ENCODE measurements at regions of chr5 and their contacts with region 1.

Region 1: GRCh38 chr5:7754992-7755596 is 95.8 kb downstream of the CFAP90 start:
- DNase-seq: peak; percentile 65
- CTCF ChIP-seq: peak; percentile 86

Region 2: GRCh38 chr5:7770436-7770835 is 15.3 kb after region 1 on chr5:
- CTCF ChIA-PET with region 1: interaction called, 13 read pairs
- POLR2A ChIA-PET with region 1: no interaction called
- DNase-seq: no peak
- CTCF ChIP-seq: no peak

Region 3: GRCh38 chr5:7916171-7916804 is 161.2 kb after region 1 on chr5:
- CTCF ChIA-PET with region 1: no interaction called
- POLR2A ChIA-PET with region 1: no interaction called
- DNase-seq: no peak
- CTCF ChIP-seq: no peak